Transverse colon (tissue), 4 donors: ENCODE measurements at regions of chr3 and their contacts with region 1.

Region 1: GRCh38 chr3:24680214-24680967 is 185.7 kb upstream of the THRB start:
- DNase-seq: peak; percentile 55
- H3K4me3 ChIP-seq: no peak overlapping the region
- H3K27ac ChIP-seq: no peak overlapping the region
- H3K4me1 ChIP-seq: peaks cover 0 to 5% (median 1%) of the 10 kb centered on the region in 4 donors
- H3K27me3 ChIP-seq: no peaks in the 10 kb centered on the region
- CTCF ChIP-seq: peak; percentile 38 to 78 (median 72)
- EP300 ChIP-seq: no peak
- POLR2A ChIP-seq: no peak

Region 2: GRCh38 chr3:23805633-23806533 is 874.5 kb before region 1 on chr3 and contains the start of gene UBE2E1:
- in situ Hi-C with region 1: no loop called
- intact Hi-C with region 1: no loop called
- DNase-seq: peak; percentile 76
- H3K4me3 ChIP-seq: peak within 1 kb of the TSS; percentile 89 to 98 (median 97)
- H3K27ac ChIP-seq: peak within 1 kb of the TSS; percentile 86 to 95 (median 88)
- H3K4me1 ChIP-seq: peaks cover 17 to 48% (median 29%) of the 10 kb centered on the region in 4 donors
- H3K27me3 ChIP-seq: no peaks in the 10 kb centered on the region
- CTCF ChIP-seq: no peak
- EP300 ChIP-seq: no peak
- POLR2A ChIP-seq: peak; percentile 46
- total RNA-seq, gene UBE2E1: 62.0 to 109 (median 76.9) TPM

Region 3: DNA sequence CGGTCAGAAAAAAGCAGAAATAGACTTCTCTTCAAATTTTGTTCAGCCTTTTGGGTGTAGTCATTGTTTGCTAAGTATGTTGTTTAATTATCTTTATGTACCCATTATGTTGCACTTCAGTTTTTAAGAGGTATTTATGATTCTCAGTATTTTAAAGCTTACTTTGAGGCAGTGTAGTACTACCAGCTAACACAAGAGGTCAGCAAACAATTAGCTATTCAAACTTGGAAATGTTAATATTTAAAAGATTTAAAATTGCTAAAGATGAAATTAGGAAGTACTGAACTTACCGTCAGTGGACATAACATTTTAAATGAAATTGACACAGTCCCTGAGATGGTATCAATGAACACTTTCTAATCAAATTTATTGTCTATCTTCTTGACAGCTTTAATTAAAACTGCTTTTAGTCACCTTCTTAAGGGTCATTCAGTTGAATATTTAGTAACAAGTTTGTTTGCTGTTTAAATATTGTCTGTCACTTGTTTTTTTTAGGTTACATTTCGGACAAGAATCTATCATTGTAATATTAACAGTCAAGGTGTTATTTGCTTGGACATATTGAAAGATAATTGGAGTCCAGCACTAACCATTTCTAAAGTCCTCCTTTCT is 791.7 kb before region 1 on chr3:
- in situ Hi-C with region 1: loop called in 2 of 4 experiments (anchors 25 kb)
- intact Hi-C with region 1: no loop called
- DNase-seq: no peak
- H3K4me3 ChIP-seq: no peak overlapping the region
- H3K27ac ChIP-seq: no peak overlapping the region
- H3K4me1 ChIP-seq: no peaks in the 10 kb centered on the region
- H3K27me3 ChIP-seq: no peaks in the 10 kb centered on the region
- CTCF ChIP-seq: peak; percentile 70 to 92 (median 88)
- EP300 ChIP-seq: no peak
- POLR2A ChIP-seq: no peak

Region 4: DNA sequence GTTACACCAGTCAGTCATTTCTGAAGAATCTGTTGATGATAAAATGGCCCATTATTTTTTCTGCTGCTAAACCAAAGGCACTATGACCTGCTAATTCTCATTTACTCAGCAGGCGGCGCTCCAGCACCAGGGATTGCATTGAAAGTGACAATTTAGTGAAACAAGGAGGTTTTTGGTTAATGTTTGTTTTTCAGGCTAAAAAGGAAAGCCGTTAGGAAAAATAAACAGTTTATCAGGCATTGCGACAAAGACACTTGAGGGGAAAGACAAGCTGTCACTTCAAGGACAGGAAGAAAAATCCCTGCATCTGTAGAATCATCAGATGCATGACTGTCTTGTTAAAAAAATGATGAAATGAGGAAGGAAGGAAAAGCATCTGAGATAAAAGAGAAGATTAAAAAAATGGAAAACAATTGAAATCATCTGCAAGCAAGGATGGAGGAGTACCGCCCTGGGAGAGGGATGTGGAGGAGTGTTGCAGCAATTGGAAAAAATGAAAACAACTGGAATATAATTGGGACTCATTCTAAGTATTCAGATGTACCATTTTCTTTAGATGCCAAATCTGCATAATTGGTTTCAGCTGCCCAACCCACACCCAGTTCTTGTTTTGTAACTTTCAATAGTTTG is 681.3 kb before region 1 on chr3:
- in situ Hi-C with region 1: loop called (anchors 10 to 25 kb)
- intact Hi-C with region 1: loop called (anchors 5 kb)
- DNase-seq: peak; percentile 71
- H3K4me3 ChIP-seq: no peak overlapping the region
- H3K27ac ChIP-seq: no peak overlapping the region
- H3K4me1 ChIP-seq: peaks cover 0 to 6% (median under 1%) of the 10 kb centered on the region in 4 donors
- H3K27me3 ChIP-seq: no peaks in the 10 kb centered on the region
- CTCF ChIP-seq: peak; percentile 84 to 95 (median 90)
- EP300 ChIP-seq: no peak
- POLR2A ChIP-seq: no peak

Region 5: DNA sequence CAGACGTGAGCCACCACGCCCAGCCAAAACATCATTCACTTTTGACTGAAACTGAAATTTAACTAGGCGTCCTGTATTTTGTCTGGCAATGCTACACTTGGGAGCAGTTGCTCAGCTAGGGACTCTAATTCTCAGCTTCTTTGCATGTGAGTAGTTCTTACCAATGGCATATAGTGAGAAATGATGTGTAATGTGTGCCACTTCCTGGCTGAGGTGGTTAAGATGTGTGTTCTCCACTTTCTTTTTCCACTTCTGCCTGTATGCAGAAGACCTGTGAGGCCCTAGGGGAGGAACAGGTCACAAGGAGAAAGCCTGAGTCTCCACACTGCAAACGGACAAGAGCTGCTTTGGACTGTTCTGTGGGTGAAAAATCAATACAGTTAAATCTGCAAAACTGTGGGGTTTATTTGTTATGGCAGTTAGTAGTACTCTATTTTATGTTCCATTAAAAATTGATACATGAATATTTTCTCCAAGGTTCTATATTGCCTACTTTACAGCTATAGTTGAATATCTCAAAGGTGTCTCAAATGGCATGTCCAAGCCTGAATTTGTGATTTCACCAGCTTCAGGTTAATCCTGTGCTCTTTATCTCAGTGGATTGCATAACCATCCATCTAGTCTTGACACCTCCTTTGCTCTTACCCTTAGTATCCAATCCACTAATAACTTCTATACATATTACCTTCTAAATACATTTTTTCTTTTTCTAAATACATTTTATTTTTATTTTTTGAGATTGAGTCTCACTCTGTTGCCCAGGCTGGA is 676.0 kb before region 1 on chr3:
- in situ Hi-C with region 1: loop called (anchors 10 to 25 kb)
- intact Hi-C with region 1: loop called (anchors 5 kb)
- DNase-seq: no peak
- H3K4me3 ChIP-seq: no peak overlapping the region
- H3K27ac ChIP-seq: no peak overlapping the region
- H3K4me1 ChIP-seq: peaks cover 0 to 1% (median 0%) of the 10 kb centered on the region in 4 donors
- H3K27me3 ChIP-seq: no peaks in the 10 kb centered on the region
- CTCF ChIP-seq: no peak
- EP300 ChIP-seq: no peak
- POLR2A ChIP-seq: no peak

Region 6: DNA sequence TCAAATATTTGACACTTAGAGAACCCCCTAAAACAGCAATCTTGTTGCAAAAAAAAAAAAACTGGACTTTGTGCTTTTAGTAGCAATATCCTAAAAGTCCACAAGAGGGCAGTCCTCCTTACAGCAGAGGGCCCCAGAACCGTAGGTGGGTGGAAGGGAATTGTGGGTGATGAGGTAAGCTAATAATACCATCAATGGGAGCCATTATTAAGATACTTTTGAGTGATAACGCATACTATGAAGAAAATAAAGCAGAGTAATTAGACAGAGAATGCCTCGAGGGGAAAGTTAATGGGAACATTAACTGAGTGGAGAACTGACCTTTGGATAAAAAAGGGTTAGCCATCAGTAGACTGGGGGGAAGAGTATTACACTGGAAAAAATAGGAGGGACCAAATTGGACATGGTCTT is 415.6 kb before region 1 on chr3:
- in situ Hi-C with region 1: no loop called
- intact Hi-C with region 1: loop called (anchors 10 kb)
- DNase-seq: no peak
- H3K4me3 ChIP-seq: no peak overlapping the region
- H3K27ac ChIP-seq: no peak overlapping the region
- H3K4me1 ChIP-seq: peaks cover 0 to 5% (median 0%) of the 10 kb centered on the region in 4 donors
- H3K27me3 ChIP-seq: no peaks in the 10 kb centered on the region
- CTCF ChIP-seq: peak; percentile 63 to 82 (median 76)
- EP300 ChIP-seq: no peak
- POLR2A ChIP-seq: no peak

Region 7: GRCh38 chr3:24494618-24495325 is 185.6 kb before region 1 on chr3 and contains the start of gene THRB:
- in situ Hi-C with region 1: no loop called
- intact Hi-C with region 1: loop called (anchors 5 kb)
- DNase-seq: peak; percentile 77
- H3K4me3 ChIP-seq: peak within 1 kb of the TSS; percentile 51 to 80 (median 70)
- H3K27ac ChIP-seq: peak within 1 kb of the TSS; percentile 91 to 97 (median 94)
- H3K4me1 ChIP-seq: peaks cover 0 to 44% (median 23%) of the 10 kb centered on the region in 4 donors
- H3K27me3 ChIP-seq: no peaks in the 10 kb centered on the region
- CTCF ChIP-seq: peak in 2 of 5 experiments; percentile 18 to 23
- EP300 ChIP-seq: no peak
- POLR2A ChIP-seq: peak; percentile 86
- total RNA-seq, gene THRB: 9.8 to 52.4 (median 31.3) TPM